ENCODE measurements at regions of chr22 and their contacts with region 1.

Region 1: GRCh38 chr22:22787786-22788459 is 99.7 kb upstream of the IGLL5 start:
- DNase-seq: peak; percentile 82
- ATAC-seq: peak; percentile 90
- H3K4me3 Mint-ChIP-seq: no peak overlapping the region
- H3K27ac Mint-ChIP-seq: no peak overlapping the region
- H3K4me1 Mint-ChIP-seq: no peaks in the 10 kb centered on the region
- H3K27me3 Mint-ChIP-seq: peaks cover 88% of the 10 kb centered on the region
- CTCF ChIP-seq: peak; percentile 66; the same call in 1 of the 2 replicates

Region 2: DNA sequence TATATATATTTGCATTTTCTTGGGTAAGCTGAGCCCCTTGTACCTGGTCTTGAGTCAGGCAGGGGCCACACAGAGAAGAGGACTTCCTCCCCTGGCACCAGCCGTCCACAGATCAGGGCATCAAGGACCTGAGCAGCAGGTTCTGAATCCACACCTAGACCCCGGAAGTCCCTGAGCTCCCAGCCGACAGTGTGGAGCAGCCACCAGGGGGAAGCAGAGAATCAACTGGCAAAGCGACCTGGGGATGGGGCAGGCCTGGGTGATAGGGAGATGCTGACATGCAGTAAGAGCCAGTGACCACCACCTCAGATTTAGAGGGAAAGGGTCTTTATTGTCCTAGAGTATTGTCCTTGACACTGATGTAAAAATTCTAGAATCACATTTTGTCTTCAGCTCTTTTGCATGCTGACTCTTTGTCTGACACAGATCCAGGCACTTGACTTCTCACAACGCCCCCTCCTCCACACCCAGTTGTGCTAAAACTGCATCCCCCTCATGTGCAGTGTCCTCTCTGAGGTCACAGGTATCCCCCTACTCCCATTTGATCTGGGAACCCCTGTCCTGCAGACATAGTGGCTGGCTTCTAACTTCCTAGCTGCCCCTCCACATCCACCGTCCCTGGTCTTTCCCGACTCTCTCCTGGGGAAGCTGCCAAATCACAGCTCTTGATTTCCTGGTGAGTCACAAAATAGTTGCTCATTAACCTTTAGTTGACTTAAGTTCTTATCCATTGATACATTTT is 34.2 kb before region 1 on chr22:
- CTCF ChIA-PET with region 1: interaction called, 17 read pairs
- POLR2A ChIA-PET with region 1: no interaction called
- DNase-seq: peak; percentile 83
- ATAC-seq: peak; percentile 97
- H3K4me3 Mint-ChIP-seq: no peak overlapping the region
- H3K27ac Mint-ChIP-seq: no peak overlapping the region
- H3K4me1 Mint-ChIP-seq: no peaks in the 10 kb centered on the region
- H3K27me3 Mint-ChIP-seq: peaks cover 96% of the 10 kb centered on the region
- CTCF ChIP-seq: peak; percentile 33; the same call in 1 of the 2 replicates

Region 3: DNA sequence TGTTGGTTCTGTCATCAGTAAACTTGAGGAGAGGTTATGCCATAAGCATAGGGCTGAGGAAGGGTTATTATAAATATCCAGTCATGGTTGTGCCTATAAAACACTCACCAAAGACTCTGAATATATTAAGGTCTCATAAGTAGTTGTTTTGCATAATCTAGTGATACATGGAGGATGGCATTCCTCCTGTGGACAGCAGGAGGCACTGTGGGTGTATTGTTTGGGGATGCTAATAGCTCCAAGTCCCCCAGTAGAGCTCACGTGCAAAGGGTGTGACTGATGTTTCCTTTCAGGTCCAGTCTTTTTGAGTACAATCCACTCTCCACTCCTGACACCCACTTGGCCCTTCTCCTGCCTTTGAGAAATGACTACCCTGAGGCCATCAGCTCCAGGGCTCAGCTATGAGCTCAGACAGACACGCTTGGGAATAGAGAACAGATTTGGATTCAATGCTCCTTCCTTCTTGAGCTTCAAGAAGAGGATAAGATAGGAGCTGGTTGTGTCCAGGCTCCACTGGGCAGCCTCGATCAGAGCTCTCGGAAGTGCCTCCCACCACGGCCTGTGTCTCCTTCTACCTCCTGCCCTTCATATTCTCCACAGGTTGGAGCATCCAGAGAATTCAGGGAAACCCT is 14.5 kb after region 1 on chr22:
- CTCF ChIA-PET with region 1: interaction called, 34 read pairs
- POLR2A ChIA-PET with region 1: no interaction called
- DNase-seq: no peak
- ATAC-seq: peak; percentile 62
- H3K4me3 Mint-ChIP-seq: no peak overlapping the region
- H3K27ac Mint-ChIP-seq: no peak overlapping the region
- H3K4me1 Mint-ChIP-seq: peaks cover 5% of the 10 kb centered on the region; the same call in 1 of the 2 replicates
- H3K27me3 Mint-ChIP-seq: peaks cover 94% of the 10 kb centered on the region
- CTCF ChIP-seq: no peak

Region 4: GRCh38 chr22:22818861-22819855 is 31.2 kb after region 1 on chr22:
- CTCF ChIA-PET with region 1: interaction called, 15 read pairs
- POLR2A ChIA-PET with region 1: no interaction called
- DNase-seq: no peak
- ATAC-seq: peak; percentile 71
- H3K4me3 Mint-ChIP-seq: no peak overlapping the region
- H3K27ac Mint-ChIP-seq: no peak overlapping the region
- H3K4me1 Mint-ChIP-seq: no peaks in the 10 kb centered on the region
- H3K27me3 Mint-ChIP-seq: peaks cover 96% of the 10 kb centered on the region
- CTCF ChIP-seq: no peak

Region 5: GRCh38 chr22:22855617-22856308 is 67.8 kb after region 1 on chr22:
- CTCF ChIA-PET with region 1: interaction called, 12 read pairs
- POLR2A ChIA-PET with region 1: no interaction called
- DNase-seq: peak; percentile 64
- ATAC-seq: peak; percentile 92
- H3K4me3 Mint-ChIP-seq: no peak overlapping the region
- H3K27ac Mint-ChIP-seq: no peak overlapping the region
- H3K4me1 Mint-ChIP-seq: no peaks in the 10 kb centered on the region
- H3K27me3 Mint-ChIP-seq: peaks cover 86% of the 10 kb centered on the region
- CTCF ChIP-seq: peak; percentile 46; the same call in 1 of the 2 replicates